ENCODE measurements at regions of chr2 and their contacts with region 1.

Region 1: GRCh38 chr2:37982147-37982582 is 57.1 kb downstream of the RMDN2 start:
- DNase-seq: peak; percentile 64 to 84 (median 74)
- ATAC-seq: peak in 1 of 2 donors; percentile 62
- H3K4me3 ChIP-seq: peak overlapping the region; percentile 26
- H3K27ac ChIP-seq: no peak overlapping the region
- H3K4me1 ChIP-seq: no peaks in the 10 kb centered on the region
- H3K27me3 ChIP-seq: no peaks in the 10 kb centered on the region

Region 2: DNA sequence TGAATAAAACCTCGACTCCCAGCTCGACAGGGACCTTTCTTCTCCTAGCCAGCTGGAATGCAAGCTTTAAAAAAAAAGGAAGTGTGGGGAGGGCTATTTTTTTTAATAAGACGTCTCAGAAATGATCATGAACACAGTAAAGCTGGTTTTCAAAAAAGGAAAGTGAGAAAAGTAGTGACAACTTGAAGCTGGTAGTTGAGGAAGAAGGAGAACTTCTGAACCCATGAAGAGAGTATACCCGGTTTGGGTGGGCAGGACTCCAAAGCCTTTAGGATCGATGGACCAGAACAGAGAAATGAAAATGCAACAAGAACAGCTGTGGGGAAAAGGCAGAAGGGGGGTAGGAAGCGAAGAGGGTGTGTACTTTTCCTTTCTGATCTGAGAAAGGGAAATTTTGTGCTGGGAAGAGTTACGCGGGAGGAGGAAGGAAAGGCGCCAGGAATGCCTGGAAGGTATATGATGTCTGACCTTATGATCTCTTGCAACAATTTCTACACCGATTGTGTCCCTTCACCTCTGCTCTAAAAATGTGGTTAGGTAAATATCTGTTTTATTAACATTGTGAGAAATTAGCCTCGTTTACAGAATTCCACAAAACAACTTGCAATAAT is 116.4 kb after region 1 on chr2:
- intact Hi-C with region 1: no loop called
- DNase-seq: peak in 1 of 3 donors; percentile 58
- ATAC-seq: peak; percentile 22 to 25
- H3K4me3 ChIP-seq: peak overlapping the region; percentile 12
- H3K27ac ChIP-seq: no peak overlapping the region
- H3K4me1 ChIP-seq: peaks cover 10% of the 10 kb centered on the region
- H3K27me3 ChIP-seq: no peaks in the 10 kb centered on the region

Region 3: GRCh38 chr2:38115216-38116032 is 133.3 kb after region 1 on chr2:
- intact Hi-C with region 1: loop called in 2 of 4 experiments (anchors 5 to 10 kb)
- DNase-seq: peak; percentile 84 to 93 (median 88)
- ATAC-seq: peak; percentile 74 to 86
- H3K4me3 ChIP-seq: no peak overlapping the region
- H3K27ac ChIP-seq: no peak overlapping the region
- H3K4me1 ChIP-seq: peaks cover 6% of the 10 kb centered on the region
- H3K27me3 ChIP-seq: no peaks in the 10 kb centered on the region

Region 4: GRCh38 chr2:38122344-38122743 is 140.2 kb after region 1 on chr2:
- intact Hi-C with region 1: loop called in 2 of 4 experiments (anchors 5 to 10 kb)
- DNase-seq: peak; percentile 59 to 83 (median 69)
- ATAC-seq: peak; percentile 82 to 92
- H3K4me3 ChIP-seq: no peak overlapping the region
- H3K27ac ChIP-seq: no peak overlapping the region
- H3K4me1 ChIP-seq: no peaks in the 10 kb centered on the region
- H3K27me3 ChIP-seq: no peaks in the 10 kb centered on the region

Region 5: GRCh38 chr2:38274286-38275276 is 292.4 kb after region 1 on chr2:
- intact Hi-C with region 1: loop called (anchors 2 to 10 kb)
- DNase-seq: no peak
- ATAC-seq: peak; percentile 63 to 86
- H3K4me3 ChIP-seq: no peak overlapping the region
- H3K27ac ChIP-seq: no peak overlapping the region
- H3K4me1 ChIP-seq: no peaks in the 10 kb centered on the region
- H3K27me3 ChIP-seq: no peaks in the 10 kb centered on the region

Measured in right cardiac atrium (tissue), 5 donors.